Activated CD8-positive, alpha-beta T cell treated with anti-CD3 and anti-CD28 coated beads for 36 hours (primary cell): ENCODE measurements at regions of chr6 and their contacts with region 1.

Region 1: GRCh38 chr6:24910961-24911712 is 24.6 kb downstream of the RIPOR2 start:
- DNase-seq: peak; percentile 64
- ATAC-seq: peak; percentile 18
- H3K4me3 Mint-ChIP-seq: peak overlapping the region; percentile 97
- H3K27ac Mint-ChIP-seq: peak overlapping the region; percentile 96
- H3K4me1 Mint-ChIP-seq: peaks cover 73% of the 10 kb centered on the region
- H3K27me3 Mint-ChIP-seq: no peaks in the 10 kb centered on the region
- CTCF ChIP-seq: no peak

Region 2: DNA sequence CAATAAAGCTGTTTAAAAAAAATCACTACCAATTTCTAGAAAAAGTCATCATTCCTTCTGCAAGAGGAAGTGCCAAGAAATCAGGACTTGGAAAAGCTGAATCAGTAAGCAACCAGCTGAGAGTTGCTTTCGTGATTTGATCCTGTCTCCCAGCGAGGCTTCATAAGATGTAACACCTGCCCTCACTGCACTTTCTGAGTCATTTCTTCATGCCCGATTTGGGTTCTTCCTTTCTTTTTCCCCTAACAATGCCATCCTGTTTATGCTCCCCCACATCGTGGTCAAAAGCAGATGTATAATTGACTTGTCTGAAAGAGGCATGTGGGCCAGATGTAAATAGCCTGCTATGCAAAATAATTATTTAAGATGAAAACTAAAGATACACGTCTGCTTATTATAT is 27.5 kb before region 1 on chr6:
- CTCF ChIA-PET with region 1: interaction called, 17 read pairs
- POLR2A ChIA-PET with region 1: interaction called, 22 read pairs
- intact Hi-C with region 1: no loop called
- DNase-seq: peak; percentile 69
- ATAC-seq: peak; percentile 79
- H3K4me3 Mint-ChIP-seq: peak overlapping the region; percentile 49
- H3K27ac Mint-ChIP-seq: peak overlapping the region; percentile 97
- H3K4me1 Mint-ChIP-seq: peaks cover 84% of the 10 kb centered on the region
- H3K27me3 Mint-ChIP-seq: no peaks in the 10 kb centered on the region
- CTCF ChIP-seq: no peak

Region 3: DNA sequence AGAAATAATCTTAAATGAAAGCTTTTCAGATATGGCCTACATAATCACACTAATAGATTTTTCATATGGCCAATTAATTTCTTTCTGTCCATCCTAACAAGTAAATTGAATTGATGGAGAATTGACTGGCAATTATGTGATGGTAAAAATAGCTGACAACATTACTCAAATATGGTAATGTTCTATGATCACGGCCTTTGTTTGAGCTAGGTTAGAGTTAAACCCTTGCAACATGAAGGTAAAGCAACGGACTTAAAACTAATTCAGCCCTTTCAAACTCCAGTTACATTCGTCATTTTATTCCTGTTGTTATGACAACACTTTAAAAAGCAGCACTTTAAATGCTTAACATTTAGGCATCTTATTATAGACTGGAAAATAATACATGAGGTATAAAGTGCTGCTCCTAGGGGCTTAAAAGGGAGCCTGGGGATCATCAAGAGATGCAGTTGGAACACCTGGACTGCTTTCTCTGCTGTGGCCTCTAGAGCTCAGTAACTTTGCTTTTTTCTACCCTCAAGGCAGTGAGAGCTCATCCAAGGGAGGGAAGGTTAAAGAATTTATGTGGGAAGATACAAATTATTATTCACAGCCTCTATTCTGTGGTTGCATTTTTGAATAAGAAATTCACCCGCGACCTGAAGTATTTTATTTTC is 22.3 kb before region 1 on chr6:
- CTCF ChIA-PET with region 1: interaction called, 17 read pairs
- POLR2A ChIA-PET with region 1: interaction called, 22 read pairs
- intact Hi-C with region 1: no loop called
- DNase-seq: no peak
- ATAC-seq: no peak
- H3K4me3 Mint-ChIP-seq: peak overlapping the region; percentile 18
- H3K27ac Mint-ChIP-seq: peak overlapping the region; percentile 88
- H3K4me1 Mint-ChIP-seq: peaks cover 83% of the 10 kb centered on the region
- H3K27me3 Mint-ChIP-seq: no peaks in the 10 kb centered on the region
- CTCF ChIP-seq: peak; percentile 27

Region 4: DNA sequence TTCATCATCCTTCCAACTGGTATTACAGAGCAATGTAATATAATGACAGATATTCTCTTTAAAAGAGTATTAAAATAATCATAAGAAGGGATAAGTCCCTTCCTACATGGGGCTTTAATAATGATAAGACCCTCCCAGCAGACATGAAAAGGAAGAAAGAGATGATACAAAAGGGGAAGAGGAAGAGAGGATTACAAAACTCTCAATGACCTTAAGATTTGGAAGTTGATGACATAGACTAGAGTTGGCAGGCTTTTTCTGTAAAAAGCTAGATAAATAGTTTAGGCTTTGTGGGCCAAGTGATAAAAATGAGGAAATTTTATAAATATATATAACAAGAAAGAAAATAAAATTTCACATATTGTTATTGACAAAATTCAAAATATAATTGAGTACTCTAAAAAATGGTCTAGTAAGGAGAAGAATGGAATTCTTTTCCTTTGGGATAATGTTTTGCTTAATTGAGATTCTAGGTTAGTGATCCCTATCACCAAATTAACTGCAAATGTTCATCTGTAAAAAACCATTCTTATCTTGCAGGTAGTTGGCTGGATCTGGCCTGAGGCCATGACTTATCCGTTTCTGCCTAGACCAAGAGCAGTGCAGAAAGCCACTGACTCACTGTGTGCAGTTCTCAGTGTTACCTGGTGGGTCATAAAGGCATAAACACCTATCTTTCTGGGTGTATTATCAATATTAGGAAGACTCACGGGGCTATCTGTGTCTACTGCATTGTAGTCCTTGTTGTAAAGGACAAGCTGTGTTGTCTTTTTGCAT is 13.6 kb after region 1 on chr6:
- CTCF ChIA-PET with region 1: interaction called, 40 read pairs
- POLR2A ChIA-PET with region 1: interaction called, 191 read pairs
- intact Hi-C with region 1: no loop called
- DNase-seq: peak; percentile 75
- ATAC-seq: peak; percentile 61
- H3K4me3 Mint-ChIP-seq: peak overlapping the region; percentile 62
- H3K27ac Mint-ChIP-seq: peak overlapping the region; percentile 94
- H3K4me1 Mint-ChIP-seq: peaks cover 72% of the 10 kb centered on the region
- H3K27me3 Mint-ChIP-seq: peaks cover 4% of the 10 kb centered on the region
- CTCF ChIP-seq: no peak

Region 5: DNA sequence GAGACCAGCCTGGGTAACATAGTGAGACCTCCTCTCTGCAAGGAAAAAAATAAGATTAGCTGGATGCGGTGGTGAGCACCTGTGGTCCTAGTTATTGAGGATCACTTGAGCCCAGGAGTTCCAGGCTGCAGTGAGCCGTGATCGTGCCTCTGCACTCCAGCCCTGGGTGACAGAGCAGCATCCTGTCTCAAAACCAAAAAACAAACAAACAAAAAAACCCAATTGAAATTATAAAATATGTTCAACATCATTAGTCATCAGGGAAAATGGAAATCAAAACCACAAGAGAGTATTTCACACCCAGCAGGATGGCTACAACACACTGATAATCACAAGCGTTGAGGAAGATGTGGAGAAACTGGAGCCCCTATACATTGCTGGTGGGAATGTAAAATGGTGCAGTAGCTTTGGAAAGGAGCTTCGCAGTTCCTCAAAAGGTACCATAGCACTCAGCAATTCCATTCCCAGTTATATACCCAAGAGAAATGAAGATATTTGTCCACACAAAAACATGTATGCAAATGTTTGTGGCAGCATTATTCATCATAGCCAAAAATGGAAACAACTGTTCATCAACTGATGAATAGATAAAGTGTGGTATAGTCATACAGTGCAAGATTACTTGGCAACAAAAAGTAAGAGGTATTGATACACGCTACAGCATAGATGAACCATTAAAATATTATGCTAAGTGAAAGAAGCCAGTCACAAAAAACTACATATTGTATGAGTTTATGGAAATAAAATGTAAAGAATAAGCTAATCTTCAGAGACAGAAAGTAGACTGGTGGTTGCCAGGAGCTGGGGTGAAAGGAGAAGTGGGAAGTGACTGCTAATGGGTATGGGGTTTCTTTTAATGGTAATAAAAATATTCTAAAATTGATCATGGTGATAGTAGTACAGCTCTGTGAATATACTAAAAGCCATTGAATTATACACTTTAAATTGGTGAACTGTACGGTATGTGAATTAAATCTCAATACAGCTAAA is 63.3 kb after region 1 on chr6:
- CTCF ChIA-PET with region 1: interaction called, 3 read pairs
- POLR2A ChIA-PET with region 1: interaction called, 12 read pairs
- intact Hi-C with region 1: no loop called
- DNase-seq: peak; percentile 70
- ATAC-seq: peak; percentile 90
- H3K4me3 Mint-ChIP-seq: peak overlapping the region; percentile 41
- H3K27ac Mint-ChIP-seq: peak overlapping the region; percentile 92
- H3K4me1 Mint-ChIP-seq: peaks cover 49% of the 10 kb centered on the region
- H3K27me3 Mint-ChIP-seq: no peaks in the 10 kb centered on the region
- CTCF ChIP-seq: no peak

Region 6: DNA sequence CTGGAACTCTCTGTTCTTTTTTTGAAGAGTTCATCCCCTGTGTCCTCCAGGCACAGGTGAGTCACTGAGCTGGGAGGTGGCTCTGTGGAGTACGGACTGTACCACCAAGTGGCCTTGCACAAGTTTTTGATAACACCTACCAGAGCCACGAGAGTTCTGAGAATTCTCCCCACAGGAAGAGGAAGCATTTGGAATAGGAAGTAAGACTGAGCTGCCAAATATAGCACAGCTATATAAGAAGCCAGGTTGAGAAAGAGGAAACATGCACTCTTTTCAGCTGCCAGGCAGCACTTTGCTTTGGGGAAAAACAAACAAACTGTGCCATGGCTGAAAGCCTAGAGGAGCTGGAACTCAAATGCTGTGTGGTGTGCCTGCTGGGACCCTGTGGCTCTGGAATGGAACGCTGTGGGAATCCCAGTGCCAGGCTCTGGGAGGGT is 95.4 kb after region 1 on chr6:
- CTCF ChIA-PET with region 1: interaction called, 16 read pairs
- POLR2A ChIA-PET with region 1: interaction called, 4 read pairs
- intact Hi-C with region 1: no loop called
- DNase-seq: peak; percentile 75
- ATAC-seq: peak; percentile 72
- H3K4me3 Mint-ChIP-seq: peak overlapping the region; percentile 52
- H3K27ac Mint-ChIP-seq: peak overlapping the region; percentile 94
- H3K4me1 Mint-ChIP-seq: peaks cover 82% of the 10 kb centered on the region
- H3K27me3 Mint-ChIP-seq: no peaks in the 10 kb centered on the region
- CTCF ChIP-seq: no peak

Region 7: GRCh38 chr6:25053875-25054371 is 142.8 kb after region 1 on chr6:
- CTCF ChIA-PET with region 1: no interaction called
- POLR2A ChIA-PET with region 1: no interaction called
- intact Hi-C with region 1: no loop called
- DNase-seq: peak; percentile 44
- ATAC-seq: peak; percentile 41
- H3K4me3 Mint-ChIP-seq: no peak overlapping the region
- H3K27ac Mint-ChIP-seq: peak overlapping the region; percentile 66
- H3K4me1 Mint-ChIP-seq: peaks cover 77% of the 10 kb centered on the region
- H3K27me3 Mint-ChIP-seq: no peaks in the 10 kb centered on the region
- CTCF ChIP-seq: no peak